Panc1 (cell line): ENCODE measurements at regions of chr6 and their contacts with region 1.

Region 1: DNA sequence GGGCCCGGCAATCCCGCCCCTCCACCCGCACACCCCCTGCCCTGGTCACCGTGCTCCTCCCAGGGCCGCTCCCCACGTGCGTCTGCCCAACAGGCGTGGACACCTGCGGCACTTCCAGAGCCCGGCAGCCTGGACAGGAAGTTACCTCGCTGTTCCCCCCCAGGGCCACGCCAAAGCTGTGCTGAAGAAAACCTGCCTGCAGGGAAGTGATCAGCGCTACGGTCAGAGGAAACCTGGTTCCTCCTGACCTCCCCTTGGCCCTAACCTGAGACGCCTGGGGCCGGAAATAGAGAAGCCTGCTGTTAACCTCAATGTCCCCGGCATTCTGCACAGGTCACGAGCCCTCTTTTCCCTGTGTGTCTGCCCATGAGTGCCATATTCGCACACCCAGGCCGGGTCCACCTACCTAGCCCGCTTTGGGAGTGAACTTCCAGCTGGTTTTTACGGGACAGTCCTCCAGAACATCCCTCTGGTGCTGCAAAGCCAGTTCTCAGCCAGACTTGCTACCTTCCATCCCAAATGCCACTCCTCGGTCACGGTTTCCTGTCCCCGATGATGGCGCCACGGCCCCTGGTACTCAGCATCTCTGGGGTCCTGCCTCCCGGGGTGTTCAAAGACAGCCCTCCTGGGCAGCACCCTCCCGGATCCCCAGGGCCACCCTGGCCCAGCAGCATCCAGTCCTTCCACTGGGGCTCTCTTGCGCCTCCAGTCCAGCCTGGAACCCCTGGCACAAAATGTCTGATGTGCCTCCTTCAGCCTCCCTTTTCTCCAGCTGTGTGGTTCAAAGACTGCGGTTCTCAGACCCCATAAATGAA is 12.0 kb upstream of the IRF4 start:
- DNase-seq: no peak
- ATAC-seq: peak; percentile 39; the same call in 1 of the 2 replicates
- H3K4me3 ChIP-seq: no peak overlapping the region
- H3K27ac ChIP-seq: no peak overlapping the region
- H3K4me1 ChIP-seq: no peaks in the 10 kb centered on the region
- H3K27me3 ChIP-seq: peaks cover 5% of the 10 kb centered on the region
- CTCF ChIP-seq: no peak

Region 2: DNA sequence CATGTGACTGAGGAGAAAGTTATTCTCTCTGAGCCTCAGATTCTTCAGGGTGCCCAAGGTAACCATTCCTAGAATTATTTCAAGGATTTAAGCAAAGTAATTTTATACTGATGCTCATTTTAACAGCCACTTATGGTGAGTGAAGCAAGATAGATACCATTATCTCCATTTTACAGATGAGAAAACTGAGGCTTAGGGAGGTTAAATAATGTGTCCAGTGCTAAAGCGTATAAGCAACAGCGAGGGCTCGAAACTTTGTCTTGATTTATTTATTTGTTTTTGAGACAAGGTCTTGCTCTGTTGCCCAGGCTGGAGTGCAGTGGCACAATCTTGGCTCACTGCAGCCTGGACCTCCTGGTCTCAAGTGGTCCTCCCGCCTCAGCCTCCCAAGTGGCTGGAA is 1063.4 kb after region 1 on chr6:
- CTCF ChIA-PET with region 1: no interaction called
- POLR2A ChIA-PET with region 1: interaction called, 12 read pairs
- in situ Hi-C with region 1: no loop called
- intact Hi-C with region 1: no loop called
- DNase-seq: no peak
- ATAC-seq: no peak
- H3K4me3 ChIP-seq: no peak overlapping the region
- H3K27ac ChIP-seq: no peak overlapping the region
- H3K4me1 ChIP-seq: no peaks in the 10 kb centered on the region
- H3K27me3 ChIP-seq: no peaks in the 10 kb centered on the region
- CTCF ChIP-seq: no peak